ENCODE measurements at regions of chr2 and their contacts with region 1.

Region 1: DNA sequence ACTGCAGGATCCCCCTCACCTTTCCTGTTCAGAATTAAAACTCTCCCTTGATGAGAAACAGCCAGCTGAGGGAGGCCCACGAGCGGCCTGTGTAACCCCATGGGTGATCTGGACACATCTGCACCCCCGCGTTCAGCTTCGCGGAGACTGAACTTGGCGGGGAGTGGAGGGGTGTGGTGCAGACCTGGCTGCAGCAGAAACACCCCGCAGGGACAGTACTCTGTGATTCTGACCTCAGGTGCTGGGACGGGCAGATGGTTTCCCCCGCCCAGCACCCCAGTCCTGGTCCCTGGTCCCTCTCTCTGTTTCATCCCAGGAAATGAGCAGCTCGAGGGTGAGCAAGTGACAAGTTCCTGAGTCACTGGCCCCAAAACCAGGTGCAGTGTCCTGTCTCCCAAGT is 41.2 kb downstream of the GBX2 start:
- DNase-seq: no peak
- H3K4me3 ChIP-seq: no peak overlapping the region
- H3K27ac ChIP-seq: no peak overlapping the region
- H3K4me1 ChIP-seq: peaks cover 0 to 10% (median 4%) of the 10 kb centered on the region in 4 experiments; a peak in 4 of 7 replicates
- H3K27me3 ChIP-seq: no peaks in the 10 kb centered on the region
- CTCF ChIP-seq: no peak
- EP300 ChIP-seq: no peak
- POLR2A ChIP-seq: no peak
- RAD21 ChIP-seq: no peak

Region 2: DNA sequence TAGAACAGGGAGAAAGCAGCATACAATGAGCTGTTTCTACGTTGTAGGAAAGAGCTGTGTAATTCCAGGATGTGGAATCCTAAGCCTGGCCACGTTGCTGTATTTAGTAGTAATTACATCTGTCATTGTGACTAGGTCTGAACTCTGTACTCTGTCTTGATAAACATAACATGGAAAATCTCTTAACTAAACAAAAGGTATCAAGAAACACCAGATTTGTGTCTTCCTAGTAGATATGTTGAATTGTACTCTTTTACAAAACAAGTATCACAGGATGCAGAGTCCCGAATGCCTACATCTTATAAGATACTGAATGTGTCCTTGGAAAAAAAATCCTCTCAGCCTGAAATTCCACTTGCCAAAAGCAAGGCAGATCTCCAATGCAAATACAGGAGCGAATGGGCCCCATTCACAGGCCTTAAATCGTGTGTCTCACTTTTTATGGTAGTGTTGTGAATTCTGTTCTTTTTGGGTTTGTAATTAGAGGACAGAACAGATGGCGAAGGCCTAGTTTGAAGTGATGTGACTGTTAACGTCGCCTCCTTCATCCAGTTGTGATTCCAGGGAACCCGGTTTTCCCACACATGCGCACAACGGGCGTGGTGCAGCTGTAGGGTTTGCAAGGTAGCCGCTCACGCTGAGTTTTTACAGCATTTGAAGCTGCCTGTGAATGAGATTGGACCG is 205.4 kb before region 1 on chr2:
- CTCF ChIA-PET with region 1: no interaction called
- POLR2A ChIA-PET with region 1: no interaction called
- DNase-seq: peak in 1 of 2 experiments; percentile 24
- H3K4me3 ChIP-seq: no peak overlapping the region
- H3K27ac ChIP-seq: no peak overlapping the region
- H3K4me1 ChIP-seq: no peaks in the 10 kb centered on the region; a peak in 1 of 7 replicates
- H3K27me3 ChIP-seq: no peaks in the 10 kb centered on the region
- CTCF ChIP-seq: no peak
- EP300 ChIP-seq: no peak
- POLR2A ChIP-seq: no peak
- RAD21 ChIP-seq: no peak

Region 3: DNA sequence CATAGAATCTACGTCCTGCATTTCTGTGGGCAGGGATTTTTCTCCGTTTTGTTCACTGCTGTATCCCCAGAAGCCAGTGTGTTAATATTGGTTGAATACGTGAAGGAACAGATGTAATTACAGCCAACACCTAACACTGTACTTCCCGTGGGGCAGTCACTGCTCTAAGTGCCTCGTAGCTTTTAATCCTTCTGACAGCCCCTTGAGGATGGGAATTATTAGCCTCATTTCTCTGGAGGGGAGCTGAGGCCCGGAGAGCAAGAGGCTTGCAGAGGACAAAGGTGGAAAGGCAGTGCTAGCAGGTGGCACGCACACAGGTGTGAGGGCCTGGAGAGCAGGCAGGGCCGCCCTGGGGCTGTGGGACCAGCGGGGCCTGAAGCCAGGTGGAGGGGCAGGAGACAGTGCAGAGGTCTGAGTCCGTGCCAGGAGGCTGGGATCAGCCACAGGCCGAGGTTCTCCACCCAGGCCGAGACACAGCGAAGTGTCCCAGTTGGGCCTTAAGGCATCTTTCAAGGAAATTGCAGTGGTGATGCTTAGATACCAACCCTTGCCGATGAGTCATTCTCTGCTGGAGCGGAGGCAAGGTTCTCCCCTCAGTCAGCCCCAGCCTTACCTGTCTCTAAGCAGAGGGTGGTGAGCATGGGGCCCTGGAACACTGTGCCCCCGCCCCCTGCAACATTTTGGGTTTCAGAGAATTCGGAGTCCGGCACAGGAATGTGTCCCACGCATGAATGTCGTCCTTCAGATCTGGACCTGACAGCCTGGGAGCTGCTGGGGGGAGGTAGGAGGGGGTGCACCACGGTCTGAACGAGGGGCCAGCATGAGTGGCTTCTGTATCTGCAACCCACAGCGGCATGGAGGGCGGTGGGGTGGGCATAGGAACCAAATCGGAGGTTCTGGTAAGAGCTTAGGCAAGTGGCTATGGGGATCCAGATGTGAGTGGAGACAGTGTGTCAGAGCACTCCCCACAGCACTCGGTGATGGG is 81.5 kb before region 1 on chr2:
- CTCF ChIA-PET with region 1: no interaction called
- POLR2A ChIA-PET with region 1: no interaction called
- DNase-seq: no peak
- H3K4me3 ChIP-seq: no peak overlapping the region
- H3K27ac ChIP-seq: no peak overlapping the region
- H3K4me1 ChIP-seq: no peaks in the 10 kb centered on the region; a peak in 1 of 7 replicates
- H3K27me3 ChIP-seq: no peaks in the 10 kb centered on the region
- CTCF ChIP-seq: no peak
- EP300 ChIP-seq: no peak
- POLR2A ChIP-seq: no peak
- RAD21 ChIP-seq: no peak

Region 4: GRCh38 chr2:236113425-236113824 is 13.6 kb before region 1 on chr2:
- CTCF ChIA-PET with region 1: interaction called, 10 read pairs
- POLR2A ChIA-PET with region 1: no interaction called
- DNase-seq: no peak
- H3K4me3 ChIP-seq: no peak overlapping the region
- H3K27ac ChIP-seq: no peak overlapping the region; the same call in 1 of the 2 replicates
- H3K4me1 ChIP-seq: peaks cover 0 to 12% (median 7%) of the 10 kb centered on the region in 4 experiments; a peak in 5 of 7 replicates
- H3K27me3 ChIP-seq: peaks cover 0 to 13% (median 6%) of the 10 kb centered on the region in 4 experiments; a peak in 5 of 7 replicates
- CTCF ChIP-seq: no peak
- EP300 ChIP-seq: no peak
- POLR2A ChIP-seq: no peak
- RAD21 ChIP-seq: no peak

Region 5: GRCh38 chr2:236184701-236185100 is 57.7 kb after region 1 on chr2:
- CTCF ChIA-PET with region 1: no interaction called
- POLR2A ChIA-PET with region 1: no interaction called
- DNase-seq: no peak
- H3K4me3 ChIP-seq: no peak overlapping the region
- H3K27ac ChIP-seq: no peak overlapping the region
- H3K4me1 ChIP-seq: peaks cover 0 to 3% (median 0%) of the 10 kb centered on the region in 4 experiments; a peak in 3 of 7 replicates
- H3K27me3 ChIP-seq: peaks cover 1 to 8% (median 6%) of the 10 kb centered on the region in 4 experiments
- CTCF ChIP-seq: no peak
- EP300 ChIP-seq: no peak
- POLR2A ChIP-seq: no peak
- RAD21 ChIP-seq: no peak

Measured in H1 (cell line).